ENCODE measurements at regions of chr4 and their contacts with region 1.

Region 1: GRCh38 chr4:92305148-92305877 is 1.5 kb downstream of the GRID2 start:
- DNase-seq: peak; percentile 29
- H3K4me3 ChIP-seq: peak overlapping the region in 2 of 3 experiments; percentile 29 to 31
- H3K27ac ChIP-seq: no peak overlapping the region
- H3K4me1 ChIP-seq: peaks cover 9% of the 10 kb centered on the region
- H3K27me3 ChIP-seq: peaks cover 46% of the 10 kb centered on the region
- CTCF ChIP-seq: no peak

Region 2: DNA sequence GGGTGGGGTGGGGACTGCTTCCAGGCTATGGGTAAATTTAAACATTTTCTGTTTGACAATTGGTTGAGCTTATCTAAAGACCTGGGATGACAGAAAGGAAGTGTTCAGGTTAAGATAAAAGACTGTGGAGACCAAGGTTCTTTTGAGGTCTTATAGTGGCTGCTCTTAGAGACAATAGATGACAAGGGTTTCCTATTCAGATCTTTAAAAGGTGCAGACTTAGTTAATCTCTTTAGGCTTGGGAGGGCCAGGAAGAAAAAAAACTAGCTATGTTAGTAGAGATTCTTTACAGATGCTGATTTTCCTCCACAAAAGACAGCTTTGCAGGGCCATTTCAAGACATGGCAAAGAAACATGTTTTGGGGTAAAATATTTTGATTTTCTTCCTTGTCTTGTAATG is 1205.6 kb before region 1 on chr4:
- CTCF ChIA-PET with region 1: no interaction called
- dilution Hi-C with region 1: no loop called
- in situ Hi-C with region 1: no loop called
- intact Hi-C with region 1: no loop called
- DNase-seq: no peak
- H3K4me3 ChIP-seq: no peak overlapping the region
- H3K27ac ChIP-seq: no peak overlapping the region
- H3K4me1 ChIP-seq: no peaks in the 10 kb centered on the region
- H3K27me3 ChIP-seq: no peaks in the 10 kb centered on the region
- CTCF ChIP-seq: no peak

Region 3: DNA sequence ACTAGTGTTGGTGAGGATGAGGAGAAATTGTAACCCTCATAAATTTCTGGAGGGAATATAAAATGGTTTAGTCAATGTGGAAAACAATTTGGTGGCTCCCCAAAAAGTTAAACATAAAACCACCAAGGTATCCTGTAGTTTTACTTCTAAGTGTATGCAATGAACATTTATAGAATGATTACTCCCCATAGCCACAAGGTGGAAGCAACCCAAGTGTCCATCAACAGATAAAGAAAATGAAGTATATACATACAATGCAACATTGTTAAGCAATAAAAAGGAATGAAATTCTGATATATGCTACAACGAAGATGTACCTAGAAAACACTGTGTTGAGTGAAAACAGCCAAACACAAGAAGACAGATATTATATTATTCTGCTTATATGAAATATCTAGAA is 570.6 kb before region 1 on chr4:
- CTCF ChIA-PET with region 1: no interaction called
- dilution Hi-C with region 1: no loop called
- in situ Hi-C with region 1: no loop called
- intact Hi-C with region 1: loop called (anchors 10 kb)
- DNase-seq: peak; percentile 16
- H3K4me3 ChIP-seq: no peak overlapping the region
- H3K27ac ChIP-seq: no peak overlapping the region
- H3K4me1 ChIP-seq: no peaks in the 10 kb centered on the region
- H3K27me3 ChIP-seq: peaks cover 2% of the 10 kb centered on the region
- CTCF ChIP-seq: peak in 1 of 2 donors; percentile 49

Measured in mammary epithelial cell (primary cell).